Panc1 (cell line): ENCODE measurements at regions of chr4 and their contacts with region 1.

Region 1: DNA sequence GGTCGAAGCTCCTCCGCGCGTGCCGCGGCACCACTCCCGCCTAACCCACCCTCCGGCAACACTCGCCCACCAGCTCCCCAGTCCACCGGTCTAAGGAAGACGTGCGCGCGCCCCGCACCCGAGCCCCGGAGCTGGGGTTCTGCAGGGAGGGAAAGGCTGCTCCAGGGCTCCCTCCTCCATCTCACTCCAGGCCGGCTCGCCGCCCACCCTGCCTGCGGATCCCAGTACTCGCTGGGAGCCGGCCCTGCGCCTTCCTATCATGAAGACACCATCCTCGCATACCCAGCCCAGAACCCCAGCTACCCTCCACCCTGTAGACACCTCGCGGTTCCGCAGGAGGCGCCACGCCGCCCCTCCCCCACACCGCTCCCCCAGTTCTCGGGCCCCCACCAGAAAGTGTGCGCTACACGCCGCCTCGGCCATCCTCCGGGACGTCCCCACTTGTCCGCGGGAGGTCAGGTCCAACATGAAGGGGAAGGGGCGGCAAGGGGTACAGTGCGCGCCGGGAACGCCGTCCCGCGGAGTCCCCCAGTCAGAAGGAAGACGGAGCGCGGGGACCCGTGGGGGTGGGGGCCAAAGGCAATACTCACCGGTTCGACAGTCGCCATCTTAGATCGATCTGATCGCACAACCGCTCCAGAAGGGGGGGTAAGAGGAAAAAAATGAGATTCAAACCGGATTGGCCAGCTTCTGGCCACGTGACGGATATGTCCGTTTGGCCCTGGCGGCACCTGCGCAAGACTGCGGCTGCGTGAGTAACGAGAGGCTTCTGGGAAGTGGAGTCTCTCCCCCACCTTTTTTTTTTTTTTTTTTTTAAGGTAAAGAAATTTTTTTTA is at the start of gene EIF4E:
- DNase-seq: peak; percentile 90
- ATAC-seq: peak; percentile 84
- H3K4me3 ChIP-seq: peak within 1 kb of the TSS; percentile 67 to 75
- H3K27ac ChIP-seq: peak within 1 kb of the TSS; percentile 96
- H3K4me1 ChIP-seq: peaks cover 10% of the 10 kb centered on the region
- H3K27me3 ChIP-seq: no peaks in the 10 kb centered on the region
- CTCF ChIP-seq: no peak
- total RNA-seq, gene EIF4E: 89.7 TPM

Region 2: DNA sequence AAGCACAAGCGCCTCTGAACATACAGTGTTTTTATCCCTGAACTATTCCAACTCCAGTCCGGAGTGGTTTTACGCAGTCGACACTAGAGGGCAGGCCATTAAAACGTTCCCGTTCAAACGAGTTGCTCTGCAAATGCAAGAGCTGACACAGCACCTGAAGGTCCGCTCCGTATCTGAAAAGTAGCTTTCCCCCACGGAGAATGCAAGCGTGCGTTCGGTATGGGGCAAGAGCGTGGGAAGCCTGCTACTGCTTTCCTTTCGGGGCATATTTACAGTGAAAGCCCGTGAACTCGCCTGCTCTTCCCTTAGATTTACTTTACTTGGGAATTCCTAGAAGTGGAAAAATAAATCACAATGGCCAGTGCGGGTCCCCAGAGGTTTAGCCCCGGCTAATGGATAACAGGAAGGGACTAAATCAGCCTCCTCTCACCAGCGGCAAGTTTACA is 461.1 kb before region 1 on chr4:
- CTCF ChIA-PET with region 1: no interaction called
- POLR2A ChIA-PET with region 1: no interaction called
- in situ Hi-C with region 1: no loop called
- intact Hi-C with region 1: loop called (anchors 10 kb)
- DNase-seq: peak; percentile 67
- ATAC-seq: peak; percentile 95
- H3K4me3 ChIP-seq: peak overlapping the region; percentile 29 to 42
- H3K27ac ChIP-seq: peak overlapping the region; percentile 59; the same call in 1 of the 2 replicates
- H3K4me1 ChIP-seq: peaks cover 3% of the 10 kb centered on the region; the same call in 1 of the 2 replicates
- H3K27me3 ChIP-seq: no peaks in the 10 kb centered on the region
- CTCF ChIP-seq: peak; percentile 80

Region 3: DNA sequence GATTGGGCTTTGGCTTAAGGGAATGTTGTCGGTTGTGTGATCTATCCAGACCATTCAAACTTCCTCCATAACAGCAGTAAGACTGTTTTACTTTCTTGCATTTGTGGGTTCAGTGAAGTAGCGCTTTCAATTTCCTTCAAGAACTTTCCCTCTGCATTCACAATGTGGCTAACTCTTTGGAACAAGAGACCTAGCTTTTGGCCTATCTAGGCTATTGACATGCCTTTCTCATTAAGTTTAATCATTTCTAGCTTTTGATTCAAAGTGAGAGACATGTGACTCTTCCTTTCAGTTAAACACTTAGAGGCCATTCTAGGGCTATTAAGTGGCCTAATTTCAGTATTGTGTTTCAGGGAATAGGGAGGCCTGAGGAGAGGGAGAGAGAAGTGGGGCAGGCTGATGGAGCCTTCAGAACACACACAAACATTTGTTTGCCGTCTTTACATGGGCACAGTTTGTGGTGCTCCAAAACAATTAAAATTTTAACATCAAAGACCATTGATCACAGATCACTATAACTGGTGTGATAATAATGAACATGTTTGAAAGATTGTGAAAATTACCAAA is 125.8 kb after region 1 on chr4:
- CTCF ChIA-PET with region 1: no interaction called
- POLR2A ChIA-PET with region 1: interaction called, 9 read pairs
- in situ Hi-C with region 1: no loop called
- intact Hi-C with region 1: loop called (anchors 10 kb)
- DNase-seq: no peak
- ATAC-seq: no peak
- H3K4me3 ChIP-seq: no peak overlapping the region
- H3K27ac ChIP-seq: no peak overlapping the region
- H3K4me1 ChIP-seq: peaks cover 11% of the 10 kb centered on the region
- H3K27me3 ChIP-seq: no peaks in the 10 kb centered on the region
- CTCF ChIP-seq: no peak

Region 4: GRCh38 chr4:100428051-100428450 is 1499.3 kb after region 1 on chr4:
- CTCF ChIA-PET with region 1: no interaction called
- POLR2A ChIA-PET with region 1: no interaction called
- in situ Hi-C with region 1: no loop called
- intact Hi-C with region 1: no loop called
- DNase-seq: no peak
- ATAC-seq: no peak
- H3K4me3 ChIP-seq: no peak overlapping the region
- H3K27ac ChIP-seq: no peak overlapping the region
- H3K4me1 ChIP-seq: no peaks in the 10 kb centered on the region
- H3K27me3 ChIP-seq: no peaks in the 10 kb centered on the region
- CTCF ChIP-seq: no peak